ENCODE measurements at regions of chr19 and their contacts with region 1.

Region 1: GRCh38 chr19:11197264-11198174 is at the start of gene KANK2:
- DNase-seq: peak; percentile 87 to 93 (median 92)
- H3K4me3 ChIP-seq: peak within 1 kb of the TSS; percentile 91
- H3K27ac ChIP-seq: peak within 1 kb of the TSS; percentile 80 to 89
- H3K4me1 ChIP-seq: peaks cover 10% of the 10 kb centered on the region
- H3K27me3 ChIP-seq: no peaks in the 10 kb centered on the region
- CTCF ChIP-seq: no peak
- EP300 ChIP-seq: no peak
- POLR2A ChIP-seq: peak; percentile 89
- total RNA-seq, gene KANK2: 238 to 642 (median 479) TPM

Region 2: GRCh38 chr19:11106477-11106876 is 91.0 kb before region 1 on chr19:
- intact Hi-C with region 1: no loop called
- DNase-seq: no peak
- H3K4me3 ChIP-seq: no peak overlapping the region
- H3K27ac ChIP-seq: no peak overlapping the region
- H3K4me1 ChIP-seq: no peaks in the 10 kb centered on the region
- H3K27me3 ChIP-seq: no peaks in the 10 kb centered on the region
- CTCF ChIP-seq: no peak
- EP300 ChIP-seq: no peak
- POLR2A ChIP-seq: no peak

Region 3: DNA sequence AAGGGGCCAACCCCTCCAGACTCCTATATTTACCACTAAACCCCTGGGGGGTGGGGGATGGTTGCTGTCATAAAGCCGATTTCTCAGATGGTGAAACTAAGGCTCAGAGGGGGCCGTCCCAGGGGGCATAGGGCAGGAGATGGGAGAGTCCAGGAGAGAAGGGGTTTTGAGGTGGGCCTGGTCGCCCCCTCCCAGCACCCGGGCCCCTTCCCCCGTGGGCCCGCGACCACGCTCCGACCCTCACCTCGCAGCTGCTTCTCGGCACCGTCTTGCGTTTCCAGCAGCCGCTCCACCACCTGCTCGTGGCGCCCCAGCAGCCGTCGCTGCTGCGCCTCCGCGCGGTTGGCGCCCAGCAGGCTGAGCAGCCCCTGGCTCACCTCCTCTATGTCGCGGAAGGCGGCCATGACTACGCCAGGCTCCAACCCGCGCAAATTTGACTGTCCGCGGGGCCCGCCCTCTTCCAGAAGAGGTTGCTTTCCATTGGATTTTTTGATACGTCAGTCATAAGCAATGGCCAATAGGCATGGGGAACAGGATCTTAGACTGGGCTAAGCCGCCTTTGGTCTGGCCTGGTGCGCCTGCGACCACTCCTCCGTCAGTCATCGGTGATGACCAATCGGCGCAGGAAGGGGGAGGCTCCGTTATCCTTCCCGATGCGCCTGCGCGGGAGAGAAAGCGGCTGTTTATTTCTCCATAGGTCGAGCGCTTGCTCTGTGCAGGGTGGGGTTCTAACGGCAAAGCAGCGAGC is 42.0 kb before region 1 on chr19 and contains the start of gene SPC24:
- intact Hi-C with region 1: loop called in 1 of 4 experiments (anchors 5 kb)
- DNase-seq: peak; percentile 92 to 95 (median 94)
- H3K4me3 ChIP-seq: peak within 1 kb of the TSS; percentile 44
- H3K27ac ChIP-seq: peak within 1 kb of the TSS; percentile 30 to 56
- H3K4me1 ChIP-seq: peaks cover 15% of the 10 kb centered on the region
- H3K27me3 ChIP-seq: no peaks in the 10 kb centered on the region
- CTCF ChIP-seq: no peak
- EP300 ChIP-seq: no peak
- POLR2A ChIP-seq: no peak
- total RNA-seq, gene SPC24: 0.93 to 2.7 (median 1.0) TPM in 6 of 7 donors, not detected in the other